ENCODE measurements at regions of chr7 and their contacts with region 1.

Region 1: DNA sequence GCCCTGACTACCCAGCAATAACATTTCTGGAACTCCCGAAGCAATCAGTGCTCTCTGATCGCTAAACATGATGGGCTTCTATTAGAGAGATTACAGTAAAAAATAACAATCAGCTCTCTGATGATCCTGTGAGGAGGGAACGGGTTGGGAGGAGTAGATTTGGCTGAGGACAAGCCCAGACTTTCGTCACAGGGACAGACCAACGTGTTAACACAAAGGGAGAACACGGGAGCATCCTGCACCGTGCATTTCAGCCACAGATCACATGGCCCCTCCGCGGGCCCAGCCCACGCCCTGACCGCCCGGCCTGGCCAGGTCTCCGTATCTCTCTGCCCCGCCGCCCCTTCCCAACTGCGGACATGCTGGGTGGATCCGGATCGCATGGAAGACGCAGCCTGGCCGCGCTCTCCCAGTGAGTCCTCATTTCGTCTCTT is 95.0 kb upstream of the AGBL3 start:
- DNase-seq: peak; percentile 79
- ATAC-seq: peak; percentile 93
- H3K4me3 ChIP-seq: peak overlapping the region; percentile 41 to 65
- H3K27ac ChIP-seq: no peak overlapping the region
- H3K4me1 ChIP-seq: peaks cover 4% of the 10 kb centered on the region; the same call in 1 of the 2 replicates
- H3K27me3 ChIP-seq: peaks cover 4% of the 10 kb centered on the region; the same call in 1 of the 2 replicates
- CTCF ChIP-seq: no peak

Region 2: GRCh38 chr7:134234216-134234615 is 657.1 kb before region 1 on chr7:
- CTCF ChIA-PET with region 1: no interaction called
- POLR2A ChIA-PET with region 1: interaction called, 17 read pairs
- in situ Hi-C with region 1: no loop called
- intact Hi-C with region 1: no loop called
- DNase-seq: no peak
- ATAC-seq: no peak
- H3K4me3 ChIP-seq: no peak overlapping the region
- H3K27ac ChIP-seq: no peak overlapping the region
- H3K4me1 ChIP-seq: no peaks in the 10 kb centered on the region
- H3K27me3 ChIP-seq: peaks cover 2% of the 10 kb centered on the region; the same call in 1 of the 2 replicates
- CTCF ChIP-seq: no peak

Region 3: DNA sequence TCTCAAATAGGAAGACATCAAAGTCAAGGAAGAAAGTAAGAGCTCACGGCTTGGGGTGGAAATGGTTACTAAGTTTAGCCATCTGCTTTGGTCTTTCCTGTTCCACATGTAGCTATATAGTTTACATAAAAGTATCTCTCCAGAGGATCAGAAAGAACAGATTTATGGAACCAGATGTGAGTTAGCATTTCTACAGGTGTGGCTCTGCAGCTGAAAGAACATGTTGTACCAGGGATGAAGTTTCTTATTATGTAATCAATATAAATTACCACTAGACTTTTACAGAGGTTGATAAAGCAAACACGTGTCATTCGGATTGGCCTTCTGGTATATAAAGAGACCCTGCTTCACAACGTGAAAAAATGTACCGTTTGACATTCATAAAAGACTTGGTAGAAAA is 91.9 kb before region 1 on chr7:
- CTCF ChIA-PET with region 1: no interaction called
- POLR2A ChIA-PET with region 1: no interaction called
- in situ Hi-C with region 1: no loop called
- intact Hi-C with region 1: no loop called
- DNase-seq: no peak
- ATAC-seq: no peak
- H3K4me3 ChIP-seq: no peak overlapping the region
- H3K27ac ChIP-seq: no peak overlapping the region
- H3K4me1 ChIP-seq: no peaks in the 10 kb centered on the region
- H3K27me3 ChIP-seq: no peaks in the 10 kb centered on the region
- CTCF ChIP-seq: no peak

Region 4: DNA sequence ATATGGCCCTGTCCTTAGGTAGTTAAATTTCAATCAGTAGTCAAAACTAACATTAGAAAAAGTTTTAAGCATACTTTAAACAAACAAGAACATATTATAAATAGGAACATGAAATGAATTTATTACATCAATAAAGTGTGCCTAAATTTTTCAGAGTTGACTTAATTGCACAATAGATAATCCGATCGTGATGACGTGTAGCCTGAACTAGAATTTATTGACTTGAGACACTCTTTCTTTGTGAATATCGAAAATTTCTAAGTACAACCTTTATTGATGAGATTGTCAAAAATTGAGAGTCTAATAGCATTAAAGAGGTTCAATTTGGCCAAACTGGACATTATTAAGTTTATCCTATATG is 55.8 kb before region 1 on chr7:
- CTCF ChIA-PET with region 1: no interaction called
- POLR2A ChIA-PET with region 1: interaction called, 20 read pairs
- in situ Hi-C with region 1: no loop called
- intact Hi-C with region 1: no loop called
- DNase-seq: no peak
- ATAC-seq: no peak
- H3K4me3 ChIP-seq: no peak overlapping the region
- H3K27ac ChIP-seq: no peak overlapping the region
- H3K4me1 ChIP-seq: no peaks in the 10 kb centered on the region
- H3K27me3 ChIP-seq: no peaks in the 10 kb centered on the region
- CTCF ChIP-seq: no peak

Measured in Panc1 (cell line).